Heart left ventricle (tissue), 16 donors: ENCODE measurements at regions of chr4 and their contacts with region 1.

Region 1: DNA sequence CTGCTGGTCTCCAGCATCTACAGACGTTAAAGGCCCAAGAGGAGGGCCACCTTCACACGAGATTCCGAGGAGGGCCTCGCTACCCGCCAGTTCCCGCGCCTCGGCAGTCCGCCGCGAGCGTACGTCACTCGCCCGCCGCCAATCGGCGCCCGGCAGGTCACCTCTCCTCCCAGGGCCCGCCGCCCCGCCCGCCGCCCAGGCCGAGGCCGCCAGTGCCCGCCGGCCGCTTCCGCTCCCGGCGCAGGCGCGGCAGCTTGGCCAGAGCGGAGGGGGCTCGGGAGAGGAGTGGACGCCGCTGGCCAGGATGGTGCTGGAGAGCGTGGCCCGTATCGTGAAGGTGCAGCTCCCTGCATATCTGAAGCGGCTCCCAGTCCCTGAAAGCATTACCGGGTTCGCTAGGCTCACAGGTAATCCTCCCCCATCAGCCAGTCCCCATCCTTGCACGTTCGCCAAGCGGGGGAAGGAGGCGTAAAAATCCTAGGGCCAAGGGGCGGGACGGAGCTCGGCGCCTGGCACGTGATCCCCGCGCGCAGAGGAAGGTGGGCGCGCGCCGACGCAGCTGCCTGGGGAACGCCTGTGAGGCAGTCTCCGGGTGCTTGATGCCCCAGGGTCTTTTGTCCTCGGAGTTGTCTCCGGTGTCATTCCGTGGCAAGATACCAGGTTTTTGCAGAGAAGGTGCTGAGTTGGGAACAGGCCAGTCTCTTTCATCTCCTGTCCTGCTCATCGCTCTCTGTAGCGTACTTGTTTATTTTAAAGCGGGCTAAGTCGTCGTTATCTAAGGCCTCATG is at the start of gene CISD2:
- DNase-seq: peak; percentile 91 to 96 (median 94)
- ATAC-seq: peak; percentile 94 to 99 (median 98)
- H3K4me3 ChIP-seq: peak within 1 kb of the TSS; percentile 66 to 93 (median 72)
- H3K27ac ChIP-seq: peak within 1 kb of the TSS; percentile 79 to 99 (median 96)
- H3K4me1 ChIP-seq: peaks cover 0 to 38% (median 19%) of the 10 kb centered on the region in 12 donors
- H3K27me3 ChIP-seq: no peaks in the 10 kb centered on the region
- CTCF ChIP-seq: no peak
- POLR2A ChIP-seq: peak in 1 of 2 donors; percentile 72
- total RNA-seq, gene CISD2: 9.0 to 22.3 (median 18.4) TPM

Region 2: GRCh38 chr4:102439236-102439614 is 429.8 kb before region 1 on chr4:
- intact Hi-C with region 1: loop called in 2 of 10 experiments (anchors 10 kb)
- DNase-seq: peak in 1 of 5 donors; percentile 12
- ATAC-seq: peak; percentile 54 to 88 (median 68)
- H3K4me3 ChIP-seq: no peak overlapping the region
- H3K27ac ChIP-seq: peak overlapping the region in 7 of 12 donors; percentile 0 to 62 (median 50)
- H3K4me1 ChIP-seq: peaks cover 0 to 24% (median 13%) of the 10 kb centered on the region in 12 donors
- H3K27me3 ChIP-seq: no peaks in the 10 kb centered on the region
- CTCF ChIP-seq: no peak
- POLR2A ChIP-seq: no peak

Region 3: GRCh38 chr4:102564399-102565059 is 304.4 kb before region 1 on chr4:
- intact Hi-C with region 1: no loop called
- DNase-seq: no peak
- ATAC-seq: peak in 1 of 4 donors; percentile 28
- H3K4me3 ChIP-seq: no peak overlapping the region
- H3K27ac ChIP-seq: no peak overlapping the region
- H3K4me1 ChIP-seq: peaks cover 0 to 32% (median 15%) of the 10 kb centered on the region in 12 donors
- H3K27me3 ChIP-seq: no peaks in the 10 kb centered on the region
- CTCF ChIP-seq: no peak
- POLR2A ChIP-seq: no peak

Region 4: GRCh38 chr4:102760645-102761295 is 108.2 kb before region 1 on chr4 and contains the start of gene MANBA:
- intact Hi-C with region 1: loop called in 2 of 10 experiments (anchors 5 to 10 kb)
- DNase-seq: peak; percentile 86 to 93 (median 89)
- ATAC-seq: peak; percentile 96 to 99 (median 98)
- H3K4me3 ChIP-seq: peak within 1 kb of the TSS; percentile 70 to 99 (median 84)
- H3K27ac ChIP-seq: peak within 1 kb of the TSS in 11 of 12 donors; percentile 70 to 98 (median 82)
- H3K4me1 ChIP-seq: peaks cover 0 to 34% (median 11%) of the 10 kb centered on the region in 12 donors
- H3K27me3 ChIP-seq: no peaks in the 10 kb centered on the region
- CTCF ChIP-seq: peak in 1 of 12 donors; percentile 22
- POLR2A ChIP-seq: peak in 1 of 2 donors; percentile 72
- total RNA-seq, gene MANBA: 25.0 to 44.0 (median 36.9) TPM

Region 5: DNA sequence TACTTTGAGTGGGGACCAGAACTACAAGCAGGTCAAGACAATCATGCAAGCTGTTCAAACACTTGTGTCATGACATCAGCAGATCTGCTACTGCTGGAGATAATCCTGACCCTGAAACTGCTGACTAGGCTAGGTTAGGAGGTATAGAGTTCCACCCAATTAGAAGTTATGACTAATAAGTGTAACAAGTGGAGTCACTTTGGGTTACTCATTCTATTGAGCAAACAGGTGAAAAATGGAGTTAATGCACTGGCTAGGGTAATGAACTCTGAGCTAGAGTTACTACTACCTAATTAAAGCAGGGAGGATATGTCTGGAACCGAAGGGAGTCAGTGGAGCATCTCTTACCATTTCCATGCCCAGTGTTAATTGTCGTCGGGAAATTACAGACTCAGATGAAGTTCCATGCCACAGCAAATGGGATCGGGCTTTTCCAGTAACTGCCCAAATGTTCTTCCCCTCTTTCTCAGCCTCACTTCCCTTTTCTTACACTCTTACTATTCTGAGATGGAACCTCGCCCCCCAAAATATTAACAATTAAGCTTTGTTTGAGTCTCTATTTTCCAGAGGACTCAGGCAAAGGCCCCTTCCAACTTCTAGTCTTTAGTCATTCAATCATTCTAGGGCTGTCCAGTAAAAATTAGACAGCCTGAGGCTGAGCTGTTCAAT is 88.4 kb before region 1 on chr4:
- intact Hi-C with region 1: no loop called
- DNase-seq: no peak
- ATAC-seq: no peak
- H3K4me3 ChIP-seq: no peak overlapping the region
- H3K27ac ChIP-seq: no peak overlapping the region
- H3K4me1 ChIP-seq: peaks cover 0 to 4% (median 0%) of the 10 kb centered on the region in 12 donors
- H3K27me3 ChIP-seq: no peaks in the 10 kb centered on the region
- CTCF ChIP-seq: no peak
- POLR2A ChIP-seq: no peak

Region 6: DNA sequence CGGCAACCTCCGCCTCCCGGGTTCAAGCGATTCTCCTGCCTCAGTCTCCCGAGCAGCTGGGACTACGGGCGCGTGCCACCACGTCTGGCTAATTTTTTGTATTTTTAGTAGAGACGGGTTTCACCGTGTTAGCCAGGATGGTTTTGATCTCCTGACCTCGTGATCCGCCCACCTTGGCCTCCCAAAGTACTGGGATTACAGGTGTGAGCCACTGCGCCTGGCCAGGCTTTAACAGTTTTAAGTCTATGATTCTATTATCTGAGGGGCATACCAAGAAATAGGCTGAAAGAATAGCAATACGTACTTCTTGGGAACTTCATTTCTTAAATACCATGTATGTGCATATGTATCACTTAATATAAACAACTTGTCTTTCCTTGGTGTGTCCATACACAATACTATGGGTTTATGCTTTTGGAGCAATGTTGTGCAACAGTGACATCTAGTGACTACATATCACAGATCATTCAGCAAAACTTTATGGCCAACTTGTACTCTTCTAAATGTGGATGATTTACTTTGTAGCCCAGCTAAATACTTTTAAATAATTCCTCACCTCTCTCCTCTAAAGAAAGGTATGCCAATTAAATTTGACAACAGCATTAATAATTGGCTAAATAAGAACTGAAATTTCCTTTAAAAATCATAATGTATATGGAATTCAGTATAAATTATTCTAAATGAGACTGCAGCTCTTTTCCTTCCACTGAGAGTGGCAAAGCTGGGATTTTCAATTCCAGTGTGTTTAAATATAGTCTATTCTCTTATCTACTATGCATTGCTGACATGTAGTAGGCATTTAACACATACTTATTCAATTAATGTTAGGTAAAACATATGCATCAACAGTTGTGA is 140.1 kb after region 1 on chr4:
- intact Hi-C with region 1: loop called in 1 of 10 experiments (anchors 5 kb)
- DNase-seq: no peak
- ATAC-seq: peak; percentile 58 to 89 (median 84)
- H3K4me3 ChIP-seq: no peak overlapping the region
- H3K27ac ChIP-seq: no peak overlapping the region
- H3K4me1 ChIP-seq: peaks cover 0 to 18% (median 10%) of the 10 kb centered on the region in 12 donors
- H3K27me3 ChIP-seq: no peaks in the 10 kb centered on the region
- CTCF ChIP-seq: peak; percentile 64 to 91 (median 74)
- POLR2A ChIP-seq: no peak

Region 7: GRCh38 chr4:103075901-103076739 is 207.1 kb after region 1 on chr4:
- intact Hi-C with region 1: loop called in 1 of 10 experiments (anchors 5 kb)
- DNase-seq: peak; percentile 61 to 86 (median 77)
- ATAC-seq: peak; percentile 65 to 95 (median 92)
- H3K4me3 ChIP-seq: peak overlapping the region; percentile 46 to 89 (median 73)
- H3K27ac ChIP-seq: peak overlapping the region; percentile 62 to 90 (median 82)
- H3K4me1 ChIP-seq: peaks cover 0 to 24% (median 7%) of the 10 kb centered on the region in 12 donors
- H3K27me3 ChIP-seq: no peaks in the 10 kb centered on the region
- CTCF ChIP-seq: peak in 2 of 12 donors; percentile 5 to 7
- POLR2A ChIP-seq: peak in 1 of 2 donors; percentile 25